ENCODE measurements at regions of chr21 and their contacts with region 1.

Region 1: GRCh38 chr21:33360881-33361602 is 36.3 kb downstream of the IFNAR1 start:
- DNase-seq: peak; percentile 71 to 89 (median 85)
- ATAC-seq: peak; percentile 70
- H3K4me3 Mint-ChIP-seq: peak overlapping the region; percentile 72 to 92 (median 90)
- H3K27ac Mint-ChIP-seq: peak overlapping the region; percentile 86 to 99 (median 94)
- H3K4me1 Mint-ChIP-seq: peaks cover 10 to 44% (median 20%) of the 10 kb centered on the region in 4 donors
- H3K27me3 Mint-ChIP-seq: peaks cover 0 to 3% (median 0%) of the 10 kb centered on the region in 5 donors

Region 2: DNA sequence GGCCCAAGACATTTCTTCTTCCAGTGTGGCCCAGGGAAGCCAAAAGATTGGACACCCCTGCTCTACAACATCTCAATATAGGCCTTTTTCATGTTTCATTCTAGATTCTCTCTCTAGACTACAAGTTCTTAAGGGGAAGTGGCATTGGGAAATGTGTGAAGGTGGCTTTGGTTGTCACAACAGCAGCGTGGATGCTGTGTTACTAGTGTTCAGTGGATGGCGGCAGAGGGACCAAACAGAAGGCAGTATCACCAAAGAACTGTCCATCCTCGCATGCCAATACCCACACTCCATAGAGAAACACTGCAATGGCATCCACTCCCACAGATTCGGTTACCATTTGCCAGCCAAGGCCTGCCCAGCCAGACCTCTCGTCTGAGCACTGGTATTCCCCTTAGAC is 155.6 kb before region 1 on chr21:
- POLR2A ChIA-PET with region 1: interaction called, 18 read pairs
- DNase-seq: peak in 2 of 10 donors; percentile 30 to 32
- ATAC-seq: peak; percentile 27 to 63
- H3K4me3 Mint-ChIP-seq: peak overlapping the region; percentile 4 to 80 (median 64)
- H3K27ac Mint-ChIP-seq: peak overlapping the region; percentile 50 to 95 (median 84)
- H3K4me1 Mint-ChIP-seq: peaks cover 41 to 82% (median 69%) of the 10 kb centered on the region in 4 donors
- H3K27me3 Mint-ChIP-seq: no peaks in the 10 kb centered on the region

Region 3: DNA sequence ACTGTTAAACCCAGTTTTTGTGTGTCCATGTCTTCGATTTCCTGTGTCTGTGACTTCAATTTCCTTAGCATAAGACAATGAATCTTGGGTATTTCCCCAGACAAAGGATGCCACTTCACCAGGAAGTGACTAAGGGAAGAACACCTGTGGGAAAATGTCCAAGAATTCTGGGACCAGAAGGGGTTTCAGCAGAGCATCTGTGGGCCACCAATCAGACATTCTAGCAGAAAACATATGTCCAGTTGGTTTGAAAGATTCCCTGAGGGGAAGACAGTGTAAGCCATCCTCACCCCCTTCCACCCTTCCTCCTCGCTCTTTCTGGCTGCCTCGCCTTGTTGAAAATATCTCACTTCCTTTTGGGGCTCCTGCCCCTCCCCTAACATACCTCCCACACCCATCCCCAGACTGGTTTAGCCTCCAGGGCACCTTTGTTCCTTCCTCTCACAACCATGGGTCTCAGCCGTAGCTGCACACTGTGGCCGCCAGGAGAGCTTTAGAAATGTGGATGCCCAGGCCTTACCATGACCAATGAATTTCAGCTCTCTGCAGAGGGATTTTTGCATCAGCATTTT is 61.8 kb before region 1 on chr21:
- POLR2A ChIA-PET with region 1: interaction called, 13 read pairs
- DNase-seq: peak in 9 of 10 donors; percentile 17 to 72 (median 34)
- ATAC-seq: peak; percentile 91 to 94
- H3K4me3 Mint-ChIP-seq: peak overlapping the region; percentile 52 to 83 (median 72)
- H3K27ac Mint-ChIP-seq: peak overlapping the region; percentile 80 to 90 (median 86)
- H3K4me1 Mint-ChIP-seq: peaks cover 21 to 69% (median 49%) of the 10 kb centered on the region in 4 donors
- H3K27me3 Mint-ChIP-seq: no peaks in the 10 kb centered on the region

Region 4: DNA sequence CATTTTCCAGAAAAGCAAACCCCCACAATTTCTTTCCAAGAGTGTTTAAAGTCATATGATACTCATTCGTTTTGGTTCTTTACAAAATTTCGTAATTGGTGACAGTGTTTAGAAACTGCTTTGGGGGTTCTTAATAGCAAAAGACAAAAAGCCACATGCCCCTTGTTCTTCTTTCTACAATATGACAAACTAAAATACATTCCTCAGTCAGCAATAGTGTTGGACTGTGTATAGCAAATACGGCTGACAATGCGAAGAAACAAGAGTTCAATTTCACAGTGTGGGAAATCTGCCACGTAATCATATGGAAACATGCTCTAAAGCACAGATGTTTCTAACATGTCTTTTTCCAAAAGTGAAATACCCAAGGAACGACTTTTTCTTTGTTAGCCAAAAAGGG is 43.9 kb before region 1 on chr21:
- POLR2A ChIA-PET with region 1: no interaction called
- DNase-seq: no peak
- ATAC-seq: no peak
- H3K4me3 Mint-ChIP-seq: no peak overlapping the region
- H3K27ac Mint-ChIP-seq: no peak overlapping the region
- H3K4me1 Mint-ChIP-seq: peaks cover 0 to 3% (median 0%) of the 10 kb centered on the region in 4 donors
- H3K27me3 Mint-ChIP-seq: peaks cover 0 to 2% (median 0%) of the 10 kb centered on the region in 5 donors

Region 5: DNA sequence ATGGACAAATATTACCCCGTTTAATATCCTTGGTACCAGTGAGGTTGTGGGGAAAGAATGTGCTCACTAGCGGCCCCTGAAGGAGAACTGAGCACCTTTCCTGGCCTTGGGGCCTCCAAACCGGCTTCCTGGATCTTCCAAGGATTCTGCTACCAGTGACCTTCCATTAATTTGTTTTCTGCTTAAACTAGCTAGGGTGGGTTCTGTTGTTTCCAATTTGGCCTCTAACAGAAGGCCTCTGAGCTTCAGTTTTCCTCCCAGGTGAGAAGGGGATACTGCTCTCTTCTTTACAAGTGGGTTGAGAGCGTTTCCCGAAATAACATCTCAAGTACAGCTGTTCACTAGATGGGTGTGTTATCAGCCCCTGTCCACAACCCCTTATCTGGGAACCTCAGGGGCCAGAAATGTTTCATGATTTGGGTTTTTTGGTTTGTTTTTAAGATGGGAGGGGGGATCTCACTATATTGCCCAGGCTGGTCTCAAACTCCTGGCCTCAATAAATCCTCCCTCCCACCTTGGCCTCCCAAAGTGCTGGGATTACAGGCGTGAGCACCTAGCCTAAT is 25.3 kb after region 1 on chr21:
- POLR2A ChIA-PET with region 1: interaction called, 46 read pairs
- DNase-seq: no peak
- ATAC-seq: no peak
- H3K4me3 Mint-ChIP-seq: peak overlapping the region in 1 of 10 donors; percentile 15
- H3K27ac Mint-ChIP-seq: peak overlapping the region in 2 of 10 donors; percentile 2 to 43
- H3K4me1 Mint-ChIP-seq: peaks cover 18 to 53% (median 47%) of the 10 kb centered on the region in 4 donors
- H3K27me3 Mint-ChIP-seq: peaks cover 0 to 3% (median 0%) of the 10 kb centered on the region in 5 donors

Region 6: DNA sequence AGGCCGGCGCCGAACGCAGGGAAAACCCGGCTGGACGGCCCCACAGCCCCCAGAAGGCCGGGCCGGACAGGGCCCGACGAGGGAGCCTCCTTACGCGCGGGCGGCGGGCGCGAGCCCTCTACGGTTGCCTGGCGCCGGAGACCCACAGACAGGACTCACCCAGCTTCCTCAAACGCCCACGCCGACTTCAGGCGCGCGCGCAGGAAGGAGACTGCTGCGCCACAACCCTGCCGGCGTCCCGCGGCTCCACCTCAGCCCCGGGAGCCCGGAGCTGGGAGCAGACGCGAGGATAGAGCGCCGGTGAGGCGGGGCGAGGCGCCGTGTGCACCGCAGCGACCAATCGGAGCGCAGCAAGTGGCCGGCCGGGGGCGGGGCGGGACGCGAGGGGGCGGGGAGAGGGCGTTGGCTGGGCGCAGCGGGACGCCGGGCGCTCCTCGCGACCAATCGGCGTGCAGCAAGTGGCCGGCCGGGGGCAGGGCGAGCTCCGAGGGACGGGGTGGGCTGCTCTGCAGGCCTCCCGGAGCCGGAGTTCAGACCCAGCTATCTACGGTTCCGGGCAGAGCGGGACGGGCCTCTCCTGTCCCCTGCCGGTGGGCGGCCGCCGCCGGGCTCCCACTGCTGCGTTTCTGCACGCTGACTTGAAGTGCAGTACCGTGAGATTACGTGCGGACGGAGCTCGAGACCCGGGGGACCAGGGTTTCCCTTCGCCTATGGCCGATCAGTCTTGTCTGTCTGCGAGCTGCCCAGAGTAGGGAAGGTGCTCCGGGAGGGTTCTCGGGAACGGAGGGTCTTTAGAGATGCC is 118.8 kb after region 1 on chr21 and contains the start of gene TMEM50B:
- POLR2A ChIA-PET with region 1: interaction called, 22 read pairs
- DNase-seq: peak; percentile 89 to 98 (median 94)
- ATAC-seq: peak; percentile 87 to 88
- H3K4me3 Mint-ChIP-seq: peak within 1 kb of the TSS; percentile 81 to 97 (median 94)
- H3K27ac Mint-ChIP-seq: peak within 1 kb of the TSS; percentile 65 to 98 (median 96)
- H3K4me1 Mint-ChIP-seq: peaks cover 11 to 32% (median 24%) of the 10 kb centered on the region in 4 donors
- H3K27me3 Mint-ChIP-seq: no peaks in the 10 kb centered on the region
- polyA plus RNA-seq, gene TMEM50B: 42.3 to 47.9 (median 45.4) TPM